Cardiac septum (tissue), 1 donor: ENCODE measurements at regions of chr6 and their contacts with region 1.

Region 1: DNA sequence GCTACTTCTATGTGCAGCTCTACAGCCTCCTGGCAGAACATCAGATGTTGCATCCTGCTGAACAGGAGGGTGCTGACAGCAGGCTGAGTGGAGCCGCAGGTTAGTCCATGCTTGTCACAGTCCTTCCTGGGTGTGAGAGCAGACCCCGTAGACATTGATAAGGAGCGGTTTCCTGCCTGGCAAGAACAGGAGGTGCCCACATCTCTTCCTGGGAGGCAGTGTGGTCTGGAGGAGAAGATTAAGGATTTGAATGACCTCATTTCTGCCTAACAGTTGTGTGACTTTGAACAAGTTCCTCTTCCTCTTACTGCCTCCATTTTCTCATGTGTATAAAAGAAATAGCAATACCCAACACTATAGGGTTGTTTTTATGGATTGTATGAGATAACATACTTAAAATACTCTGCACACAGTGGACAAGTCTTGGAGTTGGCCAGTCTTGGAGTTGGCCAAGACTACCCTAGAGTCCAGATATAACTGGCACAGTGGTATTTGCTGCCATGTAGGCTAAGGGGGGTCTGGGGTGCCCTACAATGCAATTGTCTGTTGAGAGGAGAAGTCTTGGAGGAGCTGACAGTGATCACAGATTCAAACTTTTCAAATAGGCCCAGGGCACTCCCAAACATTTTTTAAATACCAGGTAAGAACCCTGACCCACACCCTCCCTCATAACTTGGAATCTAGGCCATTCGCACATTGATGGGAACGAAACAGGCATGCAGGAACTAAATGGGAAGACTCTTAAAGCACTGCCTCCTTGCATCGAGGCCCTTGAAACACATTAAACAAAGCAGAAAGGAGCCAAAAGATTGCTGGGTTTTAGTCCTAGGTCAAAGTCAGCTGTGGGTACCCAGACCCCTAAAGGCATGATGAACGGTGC is 32.6 kb upstream of the TBC1D7 start:
- DNase-seq: no peak

Region 2: GRCh38 chr6:13101409-13101808 is 259.5 kb before region 1 on chr6:
- intact Hi-C with region 1: no loop called
- DNase-seq: no peak

Region 3: GRCh38 chr6:13194852-13195251 is 166.1 kb before region 1 on chr6:
- intact Hi-C with region 1: no loop called
- DNase-seq: no peak

Region 4: GRCh38 chr6:13407709-13408695 is 47.1 kb after region 1 on chr6:
- intact Hi-C with region 1: loop called (anchors 5 kb)
- DNase-seq: no peak

Region 5: DNA sequence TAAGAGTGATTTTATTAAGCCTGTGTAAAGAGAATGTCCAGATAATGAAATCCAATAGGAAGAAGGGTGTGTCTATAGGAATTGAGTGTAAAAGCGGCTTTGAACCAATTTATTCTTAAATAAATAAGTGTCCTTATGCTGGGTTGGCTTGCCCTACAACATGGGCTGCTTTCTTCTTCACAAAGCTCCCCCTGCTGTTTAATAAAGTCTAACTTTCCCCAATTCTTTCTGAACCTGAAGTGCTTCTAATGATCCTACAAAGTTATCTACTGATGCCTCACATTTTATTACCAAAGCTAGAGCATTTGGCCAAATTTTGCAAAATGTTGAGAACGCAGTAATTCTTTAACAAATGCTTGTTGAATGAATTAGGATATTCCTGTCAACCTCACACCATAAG is 177.2 kb after region 1 on chr6:
- intact Hi-C with region 1: loop called (anchors 10 kb)
- DNase-seq: no peak